Vagina (tissue), 2 donors: ENCODE measurements at regions of chr2 and their contacts with region 1.

Region 1: GRCh38 chr2:109318150-109318948 is 189.3 kb downstream of the SH3RF3 start:
- DNase-seq: peak in 1 of 2 donors; percentile 96
- H3K4me3 ChIP-seq: no peak overlapping the region
- H3K27ac ChIP-seq: peak overlapping the region; percentile 57
- H3K4me1 ChIP-seq: peaks cover 61% of the 10 kb centered on the region
- H3K27me3 ChIP-seq: no peaks in the 10 kb centered on the region
- CTCF ChIP-seq: peak in 1 of 3 experiments; percentile 5
- POLR2A ChIP-seq: no peak

Region 2: GRCh38 chr2:109020217-109020637 is 298.1 kb before region 1 on chr2:
- intact Hi-C with region 1: no loop called
- DNase-seq: no peak
- H3K4me3 ChIP-seq: no peak overlapping the region
- H3K27ac ChIP-seq: no peak overlapping the region
- H3K4me1 ChIP-seq: no peaks in the 10 kb centered on the region
- H3K27me3 ChIP-seq: no peaks in the 10 kb centered on the region
- CTCF ChIP-seq: no peak
- POLR2A ChIP-seq: no peak

Region 3: DNA sequence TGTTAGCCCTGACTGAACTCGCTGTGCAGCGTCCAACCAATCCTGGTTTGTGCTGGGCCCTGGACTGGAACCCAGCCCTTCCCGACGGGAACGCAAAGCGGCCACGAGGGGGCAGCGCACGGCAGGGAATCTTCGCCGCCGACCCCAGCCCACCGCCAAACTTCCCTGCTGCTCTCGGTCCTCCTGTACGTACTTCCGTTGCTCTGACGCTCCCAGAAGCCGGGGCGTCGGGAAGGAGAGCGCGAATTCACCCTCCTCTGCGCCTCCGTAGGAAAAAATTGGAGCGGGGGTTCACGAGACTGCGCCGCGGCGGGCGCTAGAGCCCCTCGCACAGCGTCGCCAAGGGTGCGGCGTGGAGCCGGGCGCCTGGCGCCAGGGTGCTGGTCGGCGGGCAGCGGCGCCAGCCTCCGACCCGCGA is 190.3 kb before region 1 on chr2:
- intact Hi-C with region 1: loop called (anchors 2 kb)
- DNase-seq: no peak
- H3K4me3 ChIP-seq: peak overlapping the region; percentile 55 to 77
- H3K27ac ChIP-seq: peak overlapping the region; percentile 66
- H3K4me1 ChIP-seq: peaks cover 37% of the 10 kb centered on the region
- H3K27me3 ChIP-seq: no peaks in the 10 kb centered on the region
- CTCF ChIP-seq: peak; percentile 76 to 97 (median 90)
- POLR2A ChIP-seq: peak in 1 of 2 donors; percentile 28